Transverse colon (tissue), 4 donors: ENCODE measurements at regions of chr5 and their contacts with region 1.

Region 1: DNA sequence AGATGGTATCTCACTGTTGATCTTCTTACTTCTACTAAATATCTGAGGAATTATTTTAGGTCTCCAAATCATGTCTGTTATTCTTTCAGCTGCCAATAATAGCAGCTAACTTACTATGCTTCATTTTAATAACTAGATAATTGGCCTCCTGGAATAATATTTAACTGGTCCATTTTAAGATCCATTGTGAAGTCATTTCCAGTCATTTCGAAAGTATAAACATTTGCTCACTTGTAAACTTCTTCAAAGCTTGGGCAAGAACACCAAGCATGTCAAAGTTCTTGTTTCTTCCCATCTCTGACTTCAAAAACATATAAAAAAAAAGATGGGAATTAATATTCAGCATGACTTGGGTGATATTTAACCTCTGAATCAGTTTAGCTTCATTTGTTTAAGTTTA is 61.4 kb upstream of the MRPS30 start:
- DNase-seq: no peak
- H3K4me3 ChIP-seq: no peak overlapping the region
- H3K27ac ChIP-seq: no peak overlapping the region
- H3K4me1 ChIP-seq: no peaks in the 10 kb centered on the region
- H3K27me3 ChIP-seq: no peaks in the 10 kb centered on the region
- CTCF ChIP-seq: no peak
- EP300 ChIP-seq: no peak
- POLR2A ChIP-seq: no peak

Region 2: DNA sequence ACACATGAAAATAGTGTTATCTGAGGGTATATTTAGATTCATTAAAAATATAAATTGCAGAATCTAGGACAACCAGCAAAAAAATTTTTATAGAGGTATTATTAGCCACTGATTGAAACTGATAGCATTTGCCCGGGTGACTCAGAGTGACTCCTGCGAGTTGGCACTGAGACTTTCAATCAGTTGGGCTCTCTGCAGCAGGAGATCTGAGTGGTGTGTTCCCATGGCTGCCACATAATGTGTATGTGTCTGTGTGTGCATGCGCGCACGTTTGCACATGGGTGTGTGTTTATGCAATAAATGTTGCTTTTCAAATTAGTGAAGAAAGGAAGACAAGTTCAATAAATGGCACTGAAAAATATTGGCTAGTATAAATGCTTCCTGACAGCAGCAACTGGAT is 38.8 kb before region 1 on chr5:
- in situ Hi-C with region 1: no loop called
- intact Hi-C with region 1: loop called (anchors 1 kb)
- DNase-seq: no peak
- H3K4me3 ChIP-seq: no peak overlapping the region
- H3K27ac ChIP-seq: no peak overlapping the region
- H3K4me1 ChIP-seq: no peaks in the 10 kb centered on the region
- H3K27me3 ChIP-seq: no peaks in the 10 kb centered on the region
- CTCF ChIP-seq: no peak
- EP300 ChIP-seq: no peak
- POLR2A ChIP-seq: no peak